ENCODE measurements at regions of chr4 and their contacts with region 1.

Region 1: GRCh38 chr4:113404841-113405240 is 355.4 kb downstream of the ANK2 start:
- DNase-seq: no peak
- ATAC-seq: peak; percentile 36

Region 2: DNA sequence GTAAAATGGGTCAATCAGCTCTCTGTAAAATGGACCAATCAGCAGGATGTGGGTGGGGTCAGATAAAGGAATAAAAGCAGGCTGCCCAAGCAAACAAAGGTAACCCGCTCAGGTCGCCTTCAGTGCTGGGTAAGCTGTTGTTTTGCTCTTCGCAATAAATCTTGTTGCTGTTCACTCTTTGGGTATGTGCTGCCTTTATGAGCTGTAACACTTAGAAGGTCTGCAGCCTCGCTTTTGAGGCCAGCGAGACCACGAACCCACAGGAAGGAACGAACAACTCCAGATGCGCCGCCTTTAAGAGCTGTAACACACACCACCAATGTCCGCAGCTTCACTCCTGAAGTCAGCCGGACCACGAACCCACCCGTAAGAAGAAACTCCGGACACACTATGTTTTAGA is 368.2 kb after region 1 on chr4:
- intact Hi-C with region 1: loop called (anchors 10 kb)
- DNase-seq: no peak
- ATAC-seq: no peak